ENCODE measurements at regions of chr11 and their contacts with region 1.

Region 1: GRCh38 chr11:44797941-44798606 is 71.3 kb downstream of the TSPAN18 start:
- DNase-seq: no peak
- H3K4me3 ChIP-seq: no peak overlapping the region
- H3K27ac ChIP-seq: no peak overlapping the region
- H3K4me1 ChIP-seq: no peaks in the 10 kb centered on the region
- H3K27me3 ChIP-seq: peaks cover 2% of the 10 kb centered on the region
- CTCF ChIP-seq: no peak

Region 2: DNA sequence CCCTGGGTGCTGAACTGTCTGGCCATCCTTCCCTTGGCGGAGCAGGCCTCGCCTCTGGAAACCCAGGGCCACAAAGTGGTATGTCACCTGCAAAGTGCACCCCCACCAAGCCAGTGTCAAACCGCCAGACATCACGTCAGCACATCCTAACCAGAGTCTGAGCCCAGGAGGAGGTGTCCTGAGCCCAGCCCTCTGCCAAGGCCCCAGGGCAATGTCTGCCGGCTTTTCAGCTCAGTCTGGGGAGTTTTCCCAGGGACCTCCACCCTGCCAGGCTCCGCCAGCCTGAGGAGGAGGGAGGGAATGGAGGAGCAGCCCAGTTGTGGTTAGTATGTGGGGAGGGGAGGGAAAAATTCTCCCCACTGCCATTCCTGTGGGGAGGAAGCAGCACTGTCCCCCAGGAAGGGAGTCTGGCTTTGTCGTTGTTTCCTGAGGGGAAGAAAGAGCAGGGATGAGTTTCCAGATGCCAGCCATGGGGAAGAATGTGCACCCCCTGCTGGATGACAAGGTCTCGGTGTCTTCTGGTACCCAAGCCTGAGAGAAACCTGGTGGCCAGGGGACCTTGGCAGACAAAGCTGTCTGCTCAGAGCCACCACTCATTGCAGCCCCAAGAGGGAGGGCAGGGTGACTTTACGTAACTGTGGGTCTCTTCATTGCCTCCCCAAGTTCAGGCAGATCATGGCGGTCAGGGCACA is 314.0 kb before region 1 on chr11:
- CTCF ChIA-PET with region 1: no interaction called
- dilution Hi-C with region 1: no loop called
- in situ Hi-C with region 1: no loop called
- intact Hi-C with region 1: no loop called
- DNase-seq: peak; percentile 8
- H3K4me3 ChIP-seq: no peak overlapping the region
- H3K27ac ChIP-seq: no peak overlapping the region
- H3K4me1 ChIP-seq: no peaks in the 10 kb centered on the region
- H3K27me3 ChIP-seq: no peaks in the 10 kb centered on the region
- CTCF ChIP-seq: peak; percentile 32 to 50

Region 3: DNA sequence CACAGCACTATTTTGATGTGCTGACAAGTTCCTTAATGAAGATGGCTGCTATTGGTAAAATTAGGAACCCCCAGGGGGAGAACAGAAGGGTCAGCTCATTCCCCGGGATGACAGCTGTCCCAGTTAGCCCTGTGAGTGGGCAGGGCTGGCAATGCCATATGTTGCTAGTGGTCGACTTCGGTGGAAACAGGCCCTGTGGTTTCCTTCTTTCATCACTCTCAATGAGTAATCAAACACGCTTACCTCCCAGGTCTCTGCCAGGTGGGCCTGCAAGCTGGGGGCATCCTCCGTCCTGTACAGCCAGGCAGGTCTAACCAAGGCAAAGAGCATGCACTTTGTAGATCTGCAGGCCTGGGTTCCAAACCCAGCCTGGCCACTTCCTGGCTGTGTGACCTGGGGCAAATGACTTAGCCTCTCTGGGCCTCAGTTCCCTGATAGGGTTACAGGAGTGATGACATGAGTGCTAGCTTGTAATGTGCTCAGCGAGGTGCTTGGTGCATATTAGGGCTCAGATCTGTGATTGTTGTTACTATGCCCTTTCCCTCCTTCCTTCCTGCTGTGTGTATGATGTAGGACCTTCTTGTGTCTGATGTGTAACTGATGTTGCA is 13.9 kb after region 1 on chr11:
- CTCF ChIA-PET with region 1: no interaction called
- dilution Hi-C with region 1: no loop called
- in situ Hi-C with region 1: no loop called
- intact Hi-C with region 1: no loop called
- DNase-seq: peak; percentile 35
- H3K4me3 ChIP-seq: no peak overlapping the region
- H3K27ac ChIP-seq: no peak overlapping the region
- H3K4me1 ChIP-seq: no peaks in the 10 kb centered on the region
- H3K27me3 ChIP-seq: peaks cover 2% of the 10 kb centered on the region
- CTCF ChIP-seq: no peak

Region 4: GRCh38 chr11:44823006-44823405 is 24.9 kb after region 1 on chr11:
- CTCF ChIA-PET with region 1: interaction called, 11 read pairs
- dilution Hi-C with region 1: no loop called
- in situ Hi-C with region 1: no loop called
- intact Hi-C with region 1: no loop called
- DNase-seq: no peak
- H3K4me3 ChIP-seq: no peak overlapping the region
- H3K27ac ChIP-seq: no peak overlapping the region
- H3K4me1 ChIP-seq: no peaks in the 10 kb centered on the region
- H3K27me3 ChIP-seq: peaks cover 5% of the 10 kb centered on the region
- CTCF ChIP-seq: peak in 1 of 2 donors; percentile 31

Measured in mammary epithelial cell (primary cell).